Ovary (tissue), 10 donors: ENCODE measurements at regions of chrX and their contacts with region 1.

Region 1: GRCh38 chrX:10189317-10190268 is 32.8 kb downstream of the CLCN4 start:
- DNase-seq: peak; percentile 68 to 82 (median 79)
- H3K4me3 ChIP-seq: no peak overlapping the region
- H3K27ac ChIP-seq: no peak overlapping the region
- H3K4me1 ChIP-seq: no peaks in the 10 kb centered on the region
- H3K27me3 ChIP-seq: no peaks in the 10 kb centered on the region
- CTCF ChIP-seq: peak in 2 of 3 donors; percentile 73 to 77
- EP300 ChIP-seq: no peak
- POLR2A ChIP-seq: no peak

Region 2: DNA sequence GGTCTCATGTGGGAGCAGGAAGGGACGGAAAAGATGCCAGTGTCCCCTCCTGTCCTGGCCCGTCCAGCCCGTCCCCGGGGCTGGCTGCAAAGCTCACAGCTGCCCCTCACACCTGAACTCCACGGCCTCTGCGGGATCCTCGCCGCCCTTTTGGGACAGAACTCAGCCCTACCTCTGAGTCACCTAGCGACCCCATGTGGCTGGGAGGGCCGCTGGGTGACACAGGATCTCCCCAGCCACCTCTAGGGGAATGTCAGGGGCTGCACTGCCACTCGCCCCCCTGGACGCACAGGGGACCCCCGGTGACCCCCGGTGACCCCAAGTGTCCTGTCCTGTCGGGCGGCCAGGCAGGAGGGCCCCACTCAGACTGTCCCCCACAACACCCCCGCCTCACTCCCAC is 1156.4 kb before region 1 on chrX:
- intact Hi-C with region 1: no loop called
- DNase-seq: no peak
- H3K4me3 ChIP-seq: no peak overlapping the region
- H3K27ac ChIP-seq: no peak overlapping the region
- H3K4me1 ChIP-seq: no peaks in the 10 kb centered on the region
- H3K27me3 ChIP-seq: no peaks in the 10 kb centered on the region
- CTCF ChIP-seq: no peak
- EP300 ChIP-seq: no peak
- POLR2A ChIP-seq: no peak

Region 3: GRCh38 chrX:10636337-10636736 is 446.7 kb after region 1 on chrX:
- intact Hi-C with region 1: loop called in 3 of 4 experiments (anchors 5 to 10 kb)
- DNase-seq: peak in 3 of 5 donors; percentile 26 to 51 (median 34)
- H3K4me3 ChIP-seq: no peak overlapping the region
- H3K27ac ChIP-seq: no peak overlapping the region
- H3K4me1 ChIP-seq: no peaks in the 10 kb centered on the region
- H3K27me3 ChIP-seq: no peaks in the 10 kb centered on the region
- CTCF ChIP-seq: peak; percentile 9 to 62 (median 50)
- EP300 ChIP-seq: no peak
- POLR2A ChIP-seq: no peak

Region 4: DNA sequence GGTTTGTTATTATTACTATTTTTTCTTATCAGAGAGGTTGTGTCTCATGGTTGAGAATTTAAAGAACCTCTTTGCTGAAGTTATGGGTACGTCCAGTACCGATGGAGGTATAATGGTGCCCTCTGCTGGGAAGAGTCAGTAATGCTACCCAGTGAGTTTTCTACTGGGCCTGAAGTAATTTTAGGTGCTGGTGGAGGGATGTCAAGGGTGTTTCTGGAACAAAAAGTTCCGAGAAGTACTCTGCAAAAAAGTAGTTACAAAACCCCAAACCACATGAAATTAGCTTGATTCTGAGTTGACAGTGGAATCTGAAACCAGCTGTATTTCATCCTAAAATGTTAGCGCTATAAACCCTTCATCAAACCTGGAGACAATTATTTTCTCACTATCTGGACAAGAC is 533.3 kb after region 1 on chrX:
- intact Hi-C with region 1: loop called in 3 of 4 experiments (anchors 10 kb)
- DNase-seq: peak in 4 of 5 donors; percentile 32 to 75 (median 50)
- H3K4me3 ChIP-seq: no peak overlapping the region
- H3K27ac ChIP-seq: no peak overlapping the region
- H3K4me1 ChIP-seq: no peaks in the 10 kb centered on the region
- H3K27me3 ChIP-seq: no peaks in the 10 kb centered on the region
- CTCF ChIP-seq: peak; percentile 35 to 54 (median 51)
- EP300 ChIP-seq: no peak
- POLR2A ChIP-seq: no peak

Region 5: GRCh38 chrX:11137543-11138139 is 948.0 kb after region 1 on chrX:
- intact Hi-C with region 1: loop called (anchors 2 to 10 kb)
- DNase-seq: no peak
- H3K4me3 ChIP-seq: no peak overlapping the region
- H3K27ac ChIP-seq: no peak overlapping the region
- H3K4me1 ChIP-seq: no peaks in the 10 kb centered on the region
- H3K27me3 ChIP-seq: no peaks in the 10 kb centered on the region
- CTCF ChIP-seq: peak; percentile 26 to 32 (median 30)
- EP300 ChIP-seq: no peak
- POLR2A ChIP-seq: no peak

Region 6: GRCh38 chrX:11143931-11144678 is 954.5 kb after region 1 on chrX:
- intact Hi-C with region 1: loop called in 3 of 4 experiments (anchors 5 to 10 kb)
- DNase-seq: peak; percentile 31 to 69 (median 35)
- H3K4me3 ChIP-seq: no peak overlapping the region
- H3K27ac ChIP-seq: no peak overlapping the region
- H3K4me1 ChIP-seq: no peaks in the 10 kb centered on the region
- H3K27me3 ChIP-seq: no peaks in the 10 kb centered on the region
- CTCF ChIP-seq: peak; percentile 15 to 70 (median 51)
- EP300 ChIP-seq: no peak
- POLR2A ChIP-seq: no peak